ENCODE measurements at regions of chr12 and their contacts with region 1.

Region 1: GRCh38 chr12:42129595-42130204 is 15.0 kb downstream of the GXYLT1 start:
- DNase-seq: no peak
- ATAC-seq: peak; percentile 78 to 79
- H3K4me3 ChIP-seq: no peak overlapping the region
- H3K27ac ChIP-seq: no peak overlapping the region
- H3K4me1 ChIP-seq: peaks cover 4% of the 10 kb centered on the region
- H3K27me3 ChIP-seq: no peaks in the 10 kb centered on the region

Region 2: DNA sequence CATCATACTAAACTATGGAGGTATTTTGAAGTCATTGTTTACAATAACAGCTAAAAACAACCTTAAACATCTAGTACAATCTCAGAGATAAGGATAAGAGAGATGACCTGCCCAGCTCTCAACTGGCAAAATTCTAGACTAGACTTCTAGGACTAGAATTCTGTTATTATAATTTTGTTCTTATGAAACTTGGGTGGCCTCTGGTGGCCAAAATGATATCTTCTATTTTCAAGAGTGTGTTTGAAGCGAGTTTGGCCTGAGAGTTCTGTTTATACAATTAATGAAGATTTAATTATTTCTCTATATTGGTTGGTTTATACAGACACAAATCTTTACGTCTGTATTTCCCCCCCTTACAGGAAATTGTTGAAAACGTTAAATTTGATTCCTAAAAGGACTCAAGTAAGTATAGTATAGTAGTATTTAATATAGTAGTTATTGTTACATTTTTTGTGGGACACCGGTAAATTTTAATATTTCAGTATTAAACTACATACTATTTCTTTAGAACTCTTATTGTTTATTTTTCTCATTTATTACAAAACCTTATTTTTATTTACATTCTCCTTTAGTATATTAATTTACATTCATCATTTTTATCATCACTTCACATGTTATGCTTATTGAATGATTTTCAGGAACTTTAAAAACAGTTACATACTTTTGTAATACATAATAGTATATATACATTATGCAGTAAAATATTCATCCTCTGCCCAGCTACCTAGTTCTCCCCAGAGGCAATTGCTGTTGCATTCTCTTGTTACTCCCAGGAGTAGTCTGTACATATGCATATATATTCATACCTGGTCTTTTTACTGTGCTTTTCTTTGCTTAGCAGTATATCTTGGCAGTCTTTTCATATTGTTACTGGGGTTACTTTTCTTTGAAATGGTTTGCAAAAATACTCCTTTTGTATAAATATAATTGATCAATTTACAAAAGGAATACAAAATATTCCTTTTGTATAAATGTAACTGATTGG is 202.9 kb after region 1 on chr12:
- intact Hi-C with region 1: loop called in 3 of 4 experiments (anchors 2 to 10 kb)
- DNase-seq: peak in 1 of 3 donors; percentile 46
- ATAC-seq: peak in 1 of 2 donors; percentile 36
- H3K4me3 ChIP-seq: no peak overlapping the region
- H3K27ac ChIP-seq: no peak overlapping the region
- H3K4me1 ChIP-seq: peaks cover 2% of the 10 kb centered on the region
- H3K27me3 ChIP-seq: no peaks in the 10 kb centered on the region

Region 3: GRCh38 chr12:42574851-42575266 is 445.2 kb after region 1 on chr12:
- intact Hi-C with region 1: loop called in 1 of 4 experiments (anchors 10 kb)
- DNase-seq: no peak
- ATAC-seq: no peak
- H3K4me3 ChIP-seq: no peak overlapping the region
- H3K27ac ChIP-seq: no peak overlapping the region
- H3K4me1 ChIP-seq: peaks cover 1% of the 10 kb centered on the region
- H3K27me3 ChIP-seq: no peaks in the 10 kb centered on the region